Caco-2 (cell line): ENCODE measurements at regions of chr6 and their contacts with region 1.

Region 1: DNA sequence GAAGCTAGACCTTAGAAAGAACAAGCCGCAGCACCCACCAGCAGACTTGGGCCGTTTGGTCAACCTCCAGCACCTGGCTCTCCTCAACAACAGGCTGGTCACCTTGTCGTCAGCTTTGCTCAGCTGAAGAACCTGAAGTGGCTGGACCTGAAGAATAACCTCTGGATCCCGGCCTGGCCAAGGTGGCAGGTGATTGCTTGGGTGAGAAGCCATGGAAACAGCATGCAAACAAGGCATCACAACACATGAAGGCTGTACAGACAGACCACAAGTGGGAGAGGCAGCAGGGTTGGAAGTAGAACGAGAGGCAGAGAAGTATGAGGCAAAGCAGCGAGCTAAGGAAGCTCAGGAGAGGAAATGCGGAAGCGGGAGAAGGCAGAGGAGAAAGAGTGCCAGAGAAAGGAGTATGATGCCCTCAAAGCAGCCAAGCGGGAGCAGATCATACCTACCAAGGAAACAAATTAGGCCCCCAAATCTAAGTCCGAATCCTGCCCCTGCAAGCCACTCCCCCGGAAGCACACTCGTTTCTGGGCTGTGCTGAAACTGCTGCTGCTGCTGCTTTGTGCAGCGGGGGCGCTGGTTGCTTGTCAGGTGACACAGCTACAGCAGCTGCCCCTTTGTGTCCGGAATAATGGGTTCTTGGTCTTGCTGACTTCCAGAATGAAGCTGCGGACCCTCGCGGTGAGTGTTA is 121.6 kb upstream of the LGSN start:
- DNase-seq: peak; percentile 84 to 85
- H3K4me3 ChIP-seq: peak overlapping the region; percentile 81
- H3K4me3 Mint-ChIP-seq: peak overlapping the region; percentile 100
- H3K27ac Mint-ChIP-seq: peak overlapping the region; percentile 98
- H3K4me1 ChIP-seq: peaks cover 6% of the 10 kb centered on the region; the same call in 1 of the 2 replicates
- H3K4me1 Mint-ChIP-seq: peaks cover 10% of the 10 kb centered on the region
- H3K27me3 ChIP-seq: no peaks in the 10 kb centered on the region
- H3K27me3 Mint-ChIP-seq: no peaks in the 10 kb centered on the region
- CTCF ChIP-seq: peak; percentile 27 to 51

Region 2: GRCh38 chr6:63307581-63308246 is 133.7 kb before region 1 on chr6:
- CTCF ChIA-PET with region 1: no interaction called
- POLR2A ChIA-PET with region 1: no interaction called
- intact Hi-C with region 1: loop called (anchors 5 kb)
- DNase-seq: peak in 1 of 2 experiments; percentile 46
- H3K4me3 ChIP-seq: no peak overlapping the region
- H3K4me3 Mint-ChIP-seq: no peak overlapping the region
- H3K27ac Mint-ChIP-seq: no peak overlapping the region
- H3K4me1 ChIP-seq: peaks cover 23% of the 10 kb centered on the region
- H3K4me1 Mint-ChIP-seq: peaks cover 11% of the 10 kb centered on the region
- H3K27me3 ChIP-seq: no peaks in the 10 kb centered on the region
- H3K27me3 Mint-ChIP-seq: no peaks in the 10 kb centered on the region
- CTCF ChIP-seq: no peak

Region 3: GRCh38 chr6:63391203-63391970 is 50.0 kb before region 1 on chr6:
- CTCF ChIA-PET with region 1: interaction called, 4 read pairs
- POLR2A ChIA-PET with region 1: interaction called, 12 read pairs
- intact Hi-C with region 1: loop called (anchors 2 kb)
- DNase-seq: peak; percentile 82 to 83
- H3K4me3 ChIP-seq: no peak overlapping the region
- H3K4me3 Mint-ChIP-seq: peak overlapping the region; percentile 67
- H3K27ac Mint-ChIP-seq: peak overlapping the region; percentile 73
- H3K4me1 ChIP-seq: peaks cover 44% of the 10 kb centered on the region
- H3K4me1 Mint-ChIP-seq: peaks cover 31% of the 10 kb centered on the region
- H3K27me3 ChIP-seq: no peaks in the 10 kb centered on the region
- H3K27me3 Mint-ChIP-seq: no peaks in the 10 kb centered on the region
- CTCF ChIP-seq: no peak

Region 4: GRCh38 chr6:63476302-63476701 is 34.9 kb after region 1 on chr6:
- CTCF ChIA-PET with region 1: interaction called, 9 read pairs
- POLR2A ChIA-PET with region 1: no interaction called
- intact Hi-C with region 1: loop called (anchors 2 kb)
- DNase-seq: no peak
- H3K4me3 ChIP-seq: no peak overlapping the region
- H3K4me3 Mint-ChIP-seq: no peak overlapping the region
- H3K27ac Mint-ChIP-seq: no peak overlapping the region
- H3K4me1 ChIP-seq: peaks cover 28% of the 10 kb centered on the region
- H3K4me1 Mint-ChIP-seq: peaks cover 34% of the 10 kb centered on the region
- H3K27me3 ChIP-seq: no peaks in the 10 kb centered on the region
- H3K27me3 Mint-ChIP-seq: no peaks in the 10 kb centered on the region
- CTCF ChIP-seq: no peak

Region 5: DNA sequence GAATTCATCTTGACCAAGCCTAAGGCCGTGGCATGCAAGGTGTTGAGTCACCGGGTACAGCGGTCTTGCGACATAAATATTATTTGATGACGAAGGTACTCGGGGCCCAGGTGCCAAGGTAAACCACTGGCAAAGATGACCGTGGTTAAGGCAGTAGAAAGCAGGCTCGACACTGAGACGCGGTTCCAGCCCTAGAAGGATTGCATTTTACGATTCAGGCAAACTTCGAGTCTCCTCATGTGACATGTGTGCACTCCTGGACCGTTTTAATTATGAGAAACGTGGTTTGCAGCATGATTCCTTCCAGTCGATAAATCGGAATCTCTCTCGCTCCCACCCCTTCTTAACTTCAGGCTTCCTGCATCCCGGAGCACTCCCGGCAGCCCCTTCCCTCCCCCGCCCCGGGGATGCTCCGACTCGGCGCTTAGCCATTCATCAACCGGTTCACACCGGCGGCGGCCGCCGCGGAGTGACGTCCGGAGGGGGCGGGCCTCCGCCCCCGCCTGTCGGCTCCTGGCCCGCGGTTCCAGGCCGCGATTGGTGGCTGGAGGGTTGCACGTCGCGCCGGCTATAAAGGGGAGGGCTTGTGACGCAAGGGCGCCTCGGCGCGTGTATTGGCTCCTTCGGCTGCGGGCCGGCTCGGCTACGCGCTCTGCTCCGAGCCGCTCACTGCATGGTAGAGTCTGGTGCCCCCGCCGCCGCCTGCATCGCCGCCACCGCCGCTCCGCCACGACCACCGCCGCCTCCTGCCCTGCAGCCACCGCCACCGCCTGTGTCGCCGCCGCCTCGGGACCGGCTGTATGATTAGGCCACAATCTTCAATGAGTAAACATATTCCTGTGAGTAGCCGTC is 130.7 kb after region 1 on chr6 and contains the starts of genes LOC128125822 and PTP4A1:
- CTCF ChIA-PET with region 1: interaction called, 6 read pairs
- POLR2A ChIA-PET with region 1: interaction called, 9 read pairs
- intact Hi-C with region 1: loop called (anchors 1 kb)
- DNase-seq: peak; percentile 96 to 98
- H3K4me3 ChIP-seq: peak within 1 kb of the TSS; percentile 98
- H3K4me3 Mint-ChIP-seq: peak within 1 kb of the TSS; percentile 88
- H3K27ac Mint-ChIP-seq: peak within 1 kb of the TSS; percentile 94
- H3K4me1 ChIP-seq: peaks cover 29% of the 10 kb centered on the region
- H3K4me1 Mint-ChIP-seq: peaks cover 8% of the 10 kb centered on the region
- H3K27me3 ChIP-seq: no peaks in the 10 kb centered on the region
- H3K27me3 Mint-ChIP-seq: no peaks in the 10 kb centered on the region
- CTCF ChIP-seq: no peak
- total RNA-seq, gene PTP4A1: 122 and 129 TPM in 2 replicates